Activated naive CD4-positive, alpha-beta T cell treated with anti-CD3 and anti-CD28 coated beads, Interleukin-2, amount 10 ng/mL, durations not matched to agents 7 days and 5 days (primary cell): ENCODE measurements at regions of chr12 and their contacts with region 1.

Region 1: DNA sequence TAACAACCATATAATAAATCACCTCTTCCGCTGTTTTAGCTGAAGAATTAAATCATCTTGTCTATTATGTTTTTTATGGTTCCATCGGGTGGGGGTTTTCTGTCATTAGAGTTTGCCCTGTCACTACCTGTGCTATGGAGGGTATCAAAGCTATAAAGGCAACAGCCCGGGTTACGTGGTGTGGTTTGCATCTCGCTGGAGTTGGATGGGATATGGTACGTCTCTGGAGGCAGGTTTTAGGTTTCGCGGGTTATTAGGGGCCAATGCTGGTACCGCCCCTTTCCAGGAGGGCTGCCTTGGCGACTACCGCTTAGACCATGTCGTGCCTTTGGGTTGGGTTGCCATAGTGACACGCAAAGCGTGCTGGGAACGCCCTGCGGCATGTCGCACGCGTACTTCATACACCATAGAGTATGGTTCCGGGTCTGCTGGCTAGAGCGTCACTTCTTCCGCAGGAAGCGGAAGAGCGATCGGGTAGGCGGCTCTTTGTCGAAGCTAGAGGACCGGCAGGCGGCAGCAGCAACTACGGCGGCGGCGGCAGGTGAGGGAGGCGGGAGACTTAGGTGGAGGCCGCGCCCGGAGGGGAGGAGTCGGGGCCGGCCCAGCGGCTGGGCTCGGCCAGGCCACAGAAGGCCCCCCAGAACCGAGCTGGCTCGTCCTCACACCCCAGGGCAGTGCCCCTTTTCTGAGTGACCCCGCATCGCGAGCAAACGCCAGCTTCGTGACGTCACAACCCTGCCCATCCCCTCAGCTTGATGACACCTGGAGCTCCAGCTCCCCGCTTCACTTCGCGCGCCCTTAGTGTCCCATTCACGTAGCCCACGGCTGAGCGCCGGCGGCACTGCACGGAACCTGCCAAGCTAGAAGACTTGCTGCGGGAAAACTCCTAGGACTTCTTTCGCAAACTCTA is at the start of gene ZC3H10:
- DNase-seq: peak; percentile 99
- H3K4me3 Mint-ChIP-seq: peak within 1 kb of the TSS; percentile 94
- H3K27ac Mint-ChIP-seq: peak within 1 kb of the TSS; percentile 97
- H3K4me1 Mint-ChIP-seq: peaks cover 46% of the 10 kb centered on the region
- H3K27me3 Mint-ChIP-seq: no peaks in the 10 kb centered on the region

Region 2: GRCh38 chr12:55705782-55706402 is 412.1 kb before region 1 on chr12:
- CTCF ChIA-PET with region 1: no interaction called
- DNase-seq: peak; percentile 44
- H3K4me3 Mint-ChIP-seq: no peak overlapping the region
- H3K27ac Mint-ChIP-seq: no peak overlapping the region
- H3K4me1 Mint-ChIP-seq: peaks cover 20% of the 10 kb centered on the region
- H3K27me3 Mint-ChIP-seq: peaks cover 66% of the 10 kb centered on the region

Region 3: DNA sequence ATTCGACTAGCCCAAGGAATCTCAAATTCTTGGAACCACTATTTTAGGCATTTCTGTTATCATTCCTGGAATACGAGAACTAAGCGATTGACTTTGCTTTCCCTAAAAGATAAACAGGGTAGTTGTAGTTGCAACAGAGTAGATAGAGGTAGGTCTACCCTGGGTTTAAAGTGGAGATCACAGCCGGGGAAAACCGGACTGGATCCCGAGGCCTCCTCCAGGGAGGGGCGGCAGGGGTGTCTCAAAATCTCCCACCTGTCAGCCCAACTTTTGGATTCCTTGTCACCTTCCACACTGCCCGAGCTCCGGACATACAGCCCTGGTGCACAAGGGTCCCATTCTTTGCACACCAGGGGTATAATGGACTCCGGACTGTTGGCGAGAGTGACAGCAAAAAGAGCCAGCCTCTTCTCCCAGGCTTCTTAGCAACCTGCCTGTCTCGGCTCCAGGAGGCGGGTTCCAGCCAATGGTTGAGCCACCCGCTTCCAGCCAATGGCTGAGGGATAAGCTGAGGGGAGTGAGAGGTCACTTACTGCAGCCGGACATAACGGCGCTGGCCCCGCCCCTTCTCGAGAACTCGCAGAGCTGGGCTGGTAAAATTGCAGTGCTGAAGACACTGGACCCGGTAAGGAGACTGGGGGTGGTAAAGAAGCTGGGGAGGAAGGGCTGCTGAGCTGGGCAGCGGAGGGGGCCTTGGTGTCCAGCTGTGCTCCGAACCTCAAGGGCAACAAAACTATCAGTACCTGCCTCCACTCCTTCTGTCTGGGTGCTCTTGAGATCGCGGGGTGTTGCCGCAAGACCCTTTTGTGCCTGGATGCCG is 121.1 kb before region 1 on chr12 and contains the start of gene SUOX:
- CTCF ChIA-PET with region 1: interaction called, 13 read pairs
- DNase-seq: peak; percentile 54
- H3K4me3 Mint-ChIP-seq: peak within 1 kb of the TSS; percentile 57
- H3K27ac Mint-ChIP-seq: peak within 1 kb of the TSS; percentile 42
- H3K4me1 Mint-ChIP-seq: peaks cover 35% of the 10 kb centered on the region
- H3K27me3 Mint-ChIP-seq: peaks cover 30% of the 10 kb centered on the region

Region 4: GRCh38 chr12:56084958-56085543 is 33.0 kb before region 1 on chr12:
- CTCF ChIA-PET with region 1: interaction called, 10 read pairs
- DNase-seq: peak; percentile 66
- H3K4me3 Mint-ChIP-seq: no peak overlapping the region
- H3K27ac Mint-ChIP-seq: no peak overlapping the region
- H3K4me1 Mint-ChIP-seq: peaks cover 16% of the 10 kb centered on the region
- H3K27me3 Mint-ChIP-seq: peaks cover 85% of the 10 kb centered on the region

Region 5: GRCh38 chr12:56127888-56128669 is 10.0 kb after region 1 on chr12 and contains the start of gene ESYT1:
- CTCF ChIA-PET with region 1: interaction called, 20 read pairs
- DNase-seq: peak; percentile 99
- H3K4me3 Mint-ChIP-seq: peak within 1 kb of the TSS; percentile 97
- H3K27ac Mint-ChIP-seq: peak within 1 kb of the TSS; percentile 94
- H3K4me1 Mint-ChIP-seq: peaks cover 78% of the 10 kb centered on the region
- H3K27me3 Mint-ChIP-seq: peaks cover 3% of the 10 kb centered on the region

Region 6: GRCh38 chr12:56189176-56189917 is 71.3 kb after region 1 on chr12 and contains the start of gene SMARCC2:
- CTCF ChIA-PET with region 1: interaction called, 87 read pairs
- DNase-seq: peak; percentile 91
- H3K4me3 Mint-ChIP-seq: peak within 1 kb of the TSS; percentile 94
- H3K27ac Mint-ChIP-seq: peak within 1 kb of the TSS; percentile 96
- H3K4me1 Mint-ChIP-seq: peaks cover 55% of the 10 kb centered on the region
- H3K27me3 Mint-ChIP-seq: peaks cover 7% of the 10 kb centered on the region